GM10248 (cell line): ENCODE measurements at regions of chr10 and their contacts with region 1.

Region 1: DNA sequence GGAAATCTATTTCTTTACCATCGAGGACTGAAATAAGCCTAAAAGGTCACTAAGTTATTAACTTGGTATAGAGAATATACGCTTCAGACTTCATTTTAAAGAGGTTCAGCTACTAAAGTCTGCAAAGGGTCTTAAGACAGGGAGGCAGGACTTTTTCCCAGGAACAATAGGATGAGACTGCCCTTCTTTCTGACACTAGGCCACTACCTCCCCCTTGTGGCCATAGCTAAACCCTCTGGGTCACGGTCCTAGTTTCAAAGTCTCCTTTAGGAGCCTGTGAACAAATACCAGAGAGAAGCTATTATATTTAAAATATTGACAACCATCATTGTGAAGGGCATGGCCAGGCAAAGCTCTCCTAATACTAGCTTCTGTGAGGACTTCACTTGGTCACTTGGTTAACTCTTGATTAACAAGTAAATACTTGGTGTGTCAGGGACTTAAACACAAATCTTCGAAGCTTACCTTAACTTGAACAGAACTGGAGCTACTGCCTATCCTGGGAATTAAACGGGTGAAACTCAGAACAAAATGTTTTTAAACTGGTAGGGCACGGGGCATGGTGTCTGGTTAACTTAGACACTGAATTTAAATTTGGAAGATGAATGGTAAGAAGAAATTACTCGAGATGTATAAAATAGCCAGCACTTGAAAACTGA is 75.6 kb downstream of the CCDC6 start:
- DNase-seq: no peak
- CTCF ChIP-seq: peak; percentile 58

Region 2: DNA sequence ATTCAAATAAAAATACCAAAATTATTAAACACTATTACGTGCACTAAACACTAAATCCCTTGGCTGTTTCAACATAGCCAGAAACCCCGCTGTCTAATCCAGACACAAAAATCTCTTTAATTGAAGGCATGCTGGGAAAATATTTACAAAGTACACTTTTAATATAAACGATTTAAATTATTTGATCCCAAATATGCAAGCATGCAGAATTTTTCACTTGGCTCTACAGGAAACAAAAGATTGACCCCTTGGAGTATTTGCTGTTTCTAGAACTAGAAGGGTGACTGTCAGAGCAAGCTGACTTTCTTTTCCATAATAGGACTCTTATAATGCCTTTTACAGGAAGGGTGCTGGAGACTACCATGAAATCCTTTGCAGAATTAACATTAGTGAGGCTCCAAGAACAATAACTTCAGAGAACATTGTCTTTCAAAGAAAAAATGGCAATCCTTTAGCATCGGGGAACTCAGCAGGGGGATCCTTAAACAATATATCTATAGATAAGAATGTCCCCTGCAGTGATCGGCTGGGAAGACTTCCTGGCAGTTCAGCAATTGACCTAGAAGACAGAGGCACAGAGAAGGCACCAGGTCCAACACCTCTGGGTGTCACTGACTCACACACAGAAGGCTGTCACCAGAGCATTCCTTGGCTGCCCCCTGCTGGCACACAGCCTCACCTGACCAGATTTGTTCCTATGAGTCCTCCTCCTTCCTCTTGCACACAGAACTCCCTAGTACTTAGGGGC is 21.7 kb before region 1 on chr10:
- CTCF ChIA-PET with region 1: interaction called, 11 read pairs
- POLR2A ChIA-PET with region 1: no interaction called
- DNase-seq: peak; percentile 52
- CTCF ChIP-seq: peak; percentile 73

Region 3: DNA sequence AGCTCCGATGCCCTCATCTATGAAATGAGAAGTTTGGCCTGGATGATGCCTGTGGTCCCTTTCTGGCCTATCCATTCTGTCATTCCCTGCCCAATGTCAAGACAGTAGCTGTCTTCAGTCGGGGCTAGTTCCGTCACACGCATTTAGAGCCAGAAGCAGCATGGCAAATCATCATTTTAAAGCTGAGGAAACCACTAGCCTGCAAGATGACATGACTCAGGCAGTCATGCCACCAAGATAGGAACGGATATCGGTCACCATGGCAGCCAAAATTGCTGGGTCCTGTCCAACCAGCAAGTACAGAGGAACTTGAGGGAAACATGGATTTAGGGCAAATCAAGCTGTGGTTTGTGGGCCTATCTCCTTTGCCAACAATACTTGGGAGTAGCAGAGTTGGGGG is 13.0 kb before region 1 on chr10:
- CTCF ChIA-PET with region 1: interaction called, 32 read pairs
- POLR2A ChIA-PET with region 1: no interaction called
- DNase-seq: no peak
- CTCF ChIP-seq: no peak